GM10248 (cell line): ENCODE measurements at regions of chr11 and their contacts with region 1.

Region 1: DNA sequence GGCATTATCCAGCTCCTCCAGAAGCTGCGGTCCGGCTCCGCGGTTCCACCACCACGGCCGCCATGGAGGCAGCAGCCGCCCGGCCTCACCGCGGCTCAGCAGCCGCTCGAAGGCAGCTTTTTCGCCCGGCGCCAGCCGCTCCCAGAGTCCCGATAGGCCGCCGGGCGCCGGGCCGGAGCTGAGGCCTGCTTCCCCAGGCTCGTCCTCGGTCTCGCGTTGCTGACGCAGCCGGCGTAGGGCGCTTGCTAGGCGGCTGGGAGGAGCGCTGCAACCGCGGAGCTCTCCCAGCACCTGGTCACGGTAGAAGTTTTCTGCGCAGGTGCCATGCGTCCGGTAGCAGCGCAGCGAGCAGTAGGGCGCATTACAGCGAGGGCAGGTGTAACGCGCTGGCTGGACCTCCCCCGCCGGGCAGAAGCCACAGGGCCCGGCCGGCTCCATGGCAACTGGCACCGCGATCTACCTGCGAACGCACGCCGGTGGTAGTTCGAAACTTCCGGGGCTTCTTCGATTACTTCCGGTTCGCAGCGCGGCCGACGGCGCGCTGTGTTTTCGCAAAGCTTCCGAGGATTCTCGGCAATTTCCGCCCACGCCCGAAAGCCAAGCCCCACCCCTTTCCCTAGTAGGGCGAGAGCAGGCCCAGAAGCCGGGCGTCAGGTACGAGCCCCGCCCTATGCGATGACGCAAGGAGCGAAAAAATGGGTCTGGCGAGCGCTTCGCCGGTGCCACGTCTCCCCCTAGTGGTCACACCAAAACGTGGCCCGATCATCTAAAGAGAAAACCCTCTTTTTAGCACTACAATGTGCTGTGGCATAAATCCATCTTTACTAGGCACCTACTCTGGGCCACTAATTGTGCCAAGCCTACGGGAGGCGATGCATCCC is at the start of gene ZNHIT2:
- DNase-seq: peak; percentile 95
- CTCF ChIP-seq: peak; percentile 84

Region 2: GRCh38 chr11:65040847-65041621 is 76.4 kb before region 1 on chr11 and contains the start of gene SAC3D1:
- CTCF ChIA-PET with region 1: interaction called, 12 read pairs
- POLR2A ChIA-PET with region 1: no interaction called
- DNase-seq: peak; percentile 96
- CTCF ChIP-seq: no peak

Region 3: DNA sequence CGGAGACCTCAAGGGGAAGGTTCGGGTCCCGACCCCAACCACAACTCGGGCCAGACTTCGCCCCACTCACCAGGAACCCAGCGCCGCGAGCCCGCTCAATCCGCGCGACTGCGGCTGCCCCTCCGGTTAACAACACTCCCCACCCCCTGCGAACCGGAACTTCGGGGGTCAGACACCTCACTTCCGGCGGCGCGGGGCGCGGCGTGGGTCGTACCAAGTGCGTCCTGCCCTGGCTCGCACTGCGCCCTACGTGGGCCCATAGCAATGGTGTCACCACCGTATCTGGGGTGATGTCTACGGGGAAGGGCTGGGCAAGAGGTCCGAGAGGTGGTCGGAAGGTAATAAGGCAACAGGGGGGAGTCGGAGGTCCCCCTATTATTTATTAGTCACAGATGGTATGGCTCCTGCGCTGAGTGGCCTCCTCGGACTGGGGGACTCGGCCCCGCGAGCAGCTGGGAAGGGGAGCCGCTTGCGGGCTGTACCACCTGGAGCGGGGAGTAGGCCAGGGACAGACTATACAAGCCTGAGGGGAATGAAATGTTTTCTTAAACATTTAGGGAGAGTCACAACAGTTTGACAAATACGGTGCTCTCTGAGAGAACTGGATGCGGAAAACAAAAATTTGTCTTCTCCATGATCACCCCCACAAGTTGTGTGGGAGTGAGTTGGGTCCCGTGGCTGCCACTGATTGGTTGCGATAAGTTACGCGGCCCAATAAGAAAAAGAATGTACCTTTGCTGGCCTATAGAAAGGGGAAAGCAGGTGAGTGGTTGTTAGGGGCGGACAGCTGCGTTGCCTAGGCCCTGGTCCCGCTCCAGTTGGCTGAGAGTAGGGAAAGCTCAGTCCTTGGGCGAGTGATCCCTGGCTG is 17.2 kb after region 1 on chr11 and contains the start of gene SYVN1:
- CTCF ChIA-PET with region 1: interaction called, 24 read pairs
- POLR2A ChIA-PET with region 1: interaction called, 10 read pairs
- DNase-seq: peak; percentile 95
- CTCF ChIP-seq: no peak